ENCODE measurements at regions of chr6 and their contacts with region 1.

Region 1: GRCh38 chr6:151067684-151068596 is 171.8 kb upstream of the AKAP12 start:
- DNase-seq: peak; percentile 99
- H3K4me3 ChIP-seq: no peak overlapping the region
- H3K27ac ChIP-seq: peak overlapping the region; percentile 90
- H3K4me1 ChIP-seq: peaks cover 61% of the 10 kb centered on the region
- H3K27me3 ChIP-seq: no peaks in the 10 kb centered on the region
- CTCF ChIP-seq: no peak
- POLR2A ChIP-seq: peak; percentile 47

Region 2: DNA sequence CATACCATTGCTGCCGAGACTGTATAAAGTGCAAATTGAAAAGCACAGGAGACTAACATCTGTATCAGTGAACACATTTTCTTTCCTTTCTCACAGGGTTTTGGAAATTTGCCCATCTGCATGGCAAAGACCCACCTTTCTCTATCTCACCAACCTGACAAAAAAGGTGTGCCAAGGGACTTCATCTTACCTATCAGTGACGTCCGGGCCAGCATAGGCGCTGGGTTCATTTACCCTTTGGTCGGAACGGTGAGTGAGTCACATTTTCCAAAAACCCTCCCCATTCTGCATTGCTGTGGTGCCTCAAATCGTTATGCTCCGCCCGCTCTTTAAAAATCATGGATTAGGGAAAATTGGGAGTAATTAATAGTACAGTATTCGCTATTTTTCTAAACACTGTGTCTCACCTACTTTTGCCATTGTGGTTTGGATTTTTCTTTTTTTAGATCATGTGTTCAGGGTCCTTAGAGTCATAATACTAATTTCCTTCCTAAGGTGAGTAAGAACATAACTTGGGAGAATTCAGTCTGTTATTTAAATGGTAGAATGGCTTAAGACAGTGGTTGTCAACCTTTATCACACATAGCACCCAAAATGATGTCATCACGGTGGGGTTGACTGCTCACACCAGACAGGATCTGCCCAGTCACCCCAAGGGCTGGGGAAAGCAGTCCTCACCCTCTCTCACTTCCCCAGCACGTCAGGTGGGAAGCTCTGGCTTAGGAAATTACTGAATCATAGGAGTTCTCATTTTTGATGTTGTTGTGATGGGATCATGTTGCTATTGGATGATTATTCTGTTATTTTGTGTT is 30.9 kb before region 1 on chr6:
- CTCF ChIA-PET with region 1: interaction called, 8 read pairs
- POLR2A ChIA-PET with region 1: interaction called, 4 read pairs
- dilution Hi-C with region 1: no loop called
- intact Hi-C with region 1: loop called (anchors 1 kb)
- DNase-seq: peak; percentile 82
- H3K4me3 ChIP-seq: no peak overlapping the region
- H3K27ac ChIP-seq: peak overlapping the region; percentile 100
- H3K4me1 ChIP-seq: peaks cover 52% of the 10 kb centered on the region
- H3K27me3 ChIP-seq: no peaks in the 10 kb centered on the region
- CTCF ChIP-seq: no peak
- POLR2A ChIP-seq: peak; percentile 44

Region 3: GRCh38 chr6:151240036-151240685 is 172.2 kb after region 1 on chr6:
- CTCF ChIA-PET with region 1: no interaction called
- POLR2A ChIA-PET with region 1: no interaction called
- dilution Hi-C with region 1: no loop called
- intact Hi-C with region 1: loop called (anchors 1 kb)
- DNase-seq: peak; percentile 73
- H3K4me3 ChIP-seq: peak overlapping the region; percentile 64 to 96 (median 69)
- H3K27ac ChIP-seq: peak overlapping the region; percentile 59
- H3K4me1 ChIP-seq: peaks cover 30% of the 10 kb centered on the region
- H3K27me3 ChIP-seq: no peaks in the 10 kb centered on the region
- CTCF ChIP-seq: peak in 1 of 2 donors; percentile 17
- POLR2A ChIP-seq: peak; percentile 79

Measured in endothelial cell of umbilical vein (primary cell).